CD4-positive, alpha-beta memory T cell (primary cell): ENCODE measurements at regions of chr10 and their contacts with region 1.

Region 1: GRCh38 chr10:9060314-9060713 is 1005.8 kb downstream of the GATA3 start:
- DNase-seq: peak in 3 of 5 donors; percentile 9 to 33 (median 10)
- H3K4me3 ChIP-seq: no peak overlapping the region
- H3K4me3 Mint-ChIP-seq: peak overlapping the region; percentile 43 to 72 (median 55)
- H3K27ac ChIP-seq: no peak overlapping the region
- H3K27ac Mint-ChIP-seq: peak overlapping the region in 6 of 7 donors; percentile 18 to 84 (median 66)
- H3K4me1 ChIP-seq: peaks cover 17% of the 10 kb centered on the region
- H3K4me1 Mint-ChIP-seq: peaks cover 10 to 23% (median 12%) of the 10 kb centered on the region in 4 donors
- H3K27me3 ChIP-seq: no peaks in the 10 kb centered on the region
- H3K27me3 Mint-ChIP-seq: peaks cover 0 to 1% of the 10 kb centered on the region in 2 donors

Region 2: GRCh38 chr10:9097206-9097985 is 37.1 kb after region 1 on chr10:
- CTCF ChIA-PET with region 1: interaction called, 3 read pairs
- POLR2A ChIA-PET with region 1: interaction called, 3 read pairs
- intact Hi-C with region 1: loop called (anchors 5 kb)
- DNase-seq: peak in 4 of 5 donors; percentile 71 to 82 (median 77)
- H3K4me3 ChIP-seq: no peak overlapping the region
- H3K4me3 Mint-ChIP-seq: peak overlapping the region in 6 of 8 donors; percentile 12 to 67 (median 47)
- H3K27ac ChIP-seq: no peak overlapping the region
- H3K27ac Mint-ChIP-seq: peak overlapping the region; percentile 77 to 95 (median 88)
- H3K4me1 ChIP-seq: peaks cover 33% of the 10 kb centered on the region
- H3K4me1 Mint-ChIP-seq: peaks cover 17 to 30% (median 25%) of the 10 kb centered on the region in 4 donors
- H3K27me3 ChIP-seq: no peaks in the 10 kb centered on the region
- H3K27me3 Mint-ChIP-seq: peaks cover 0 to 2% of the 10 kb centered on the region in 2 donors

Region 3: GRCh38 chr10:9149147-9149895 is 89.0 kb after region 1 on chr10:
- CTCF ChIA-PET with region 1: no interaction called
- POLR2A ChIA-PET with region 1: no interaction called
- intact Hi-C with region 1: no loop called
- DNase-seq: no peak
- H3K4me3 ChIP-seq: no peak overlapping the region
- H3K4me3 Mint-ChIP-seq: no peak overlapping the region
- H3K27ac ChIP-seq: no peak overlapping the region
- H3K27ac Mint-ChIP-seq: no peak overlapping the region
- H3K4me1 ChIP-seq: no peaks in the 10 kb centered on the region
- H3K4me1 Mint-ChIP-seq: no peaks in the 10 kb centered on the region
- H3K27me3 ChIP-seq: no peaks in the 10 kb centered on the region
- H3K27me3 Mint-ChIP-seq: peaks cover 8 to 12% of the 10 kb centered on the region in 2 donors